Ovary (tissue), 10 donors: ENCODE measurements at regions of chr1 and their contacts with region 1.

Region 1: DNA sequence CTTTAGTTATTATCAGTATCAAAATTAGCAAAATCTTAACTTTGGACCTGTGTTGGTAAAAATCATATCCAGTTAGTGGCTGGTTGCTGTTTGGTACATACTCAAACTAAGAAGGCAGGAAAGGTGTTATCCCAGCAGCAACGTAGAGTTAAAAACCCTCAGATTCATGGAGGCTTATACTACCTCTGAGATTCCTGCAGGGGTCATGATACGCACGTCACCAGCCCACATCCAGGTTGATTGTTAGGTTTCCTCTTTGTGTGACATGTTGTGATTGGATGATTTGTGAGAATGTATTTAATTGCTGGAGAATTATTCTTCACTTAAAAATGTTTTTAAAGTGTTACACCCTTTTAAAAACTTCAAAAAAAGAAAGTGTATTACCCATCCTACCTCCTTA is 423.3 kb upstream of the ADGRL2 start:
- DNase-seq: no peak
- H3K4me3 ChIP-seq: no peak overlapping the region
- H3K27ac ChIP-seq: no peak overlapping the region
- H3K4me1 ChIP-seq: no peaks in the 10 kb centered on the region
- H3K27me3 ChIP-seq: no peaks in the 10 kb centered on the region
- CTCF ChIP-seq: no peak
- EP300 ChIP-seq: no peak
- POLR2A ChIP-seq: no peak

Region 2: GRCh38 chr1:81407000-81407875 is 29.8 kb after region 1 on chr1:
- intact Hi-C with region 1: loop called in 1 of 4 experiments (anchors 1 kb)
- DNase-seq: no peak
- H3K4me3 ChIP-seq: no peak overlapping the region
- H3K27ac ChIP-seq: no peak overlapping the region
- H3K4me1 ChIP-seq: no peaks in the 10 kb centered on the region
- H3K27me3 ChIP-seq: no peaks in the 10 kb centered on the region
- CTCF ChIP-seq: no peak
- EP300 ChIP-seq: no peak
- POLR2A ChIP-seq: no peak

Region 3: DNA sequence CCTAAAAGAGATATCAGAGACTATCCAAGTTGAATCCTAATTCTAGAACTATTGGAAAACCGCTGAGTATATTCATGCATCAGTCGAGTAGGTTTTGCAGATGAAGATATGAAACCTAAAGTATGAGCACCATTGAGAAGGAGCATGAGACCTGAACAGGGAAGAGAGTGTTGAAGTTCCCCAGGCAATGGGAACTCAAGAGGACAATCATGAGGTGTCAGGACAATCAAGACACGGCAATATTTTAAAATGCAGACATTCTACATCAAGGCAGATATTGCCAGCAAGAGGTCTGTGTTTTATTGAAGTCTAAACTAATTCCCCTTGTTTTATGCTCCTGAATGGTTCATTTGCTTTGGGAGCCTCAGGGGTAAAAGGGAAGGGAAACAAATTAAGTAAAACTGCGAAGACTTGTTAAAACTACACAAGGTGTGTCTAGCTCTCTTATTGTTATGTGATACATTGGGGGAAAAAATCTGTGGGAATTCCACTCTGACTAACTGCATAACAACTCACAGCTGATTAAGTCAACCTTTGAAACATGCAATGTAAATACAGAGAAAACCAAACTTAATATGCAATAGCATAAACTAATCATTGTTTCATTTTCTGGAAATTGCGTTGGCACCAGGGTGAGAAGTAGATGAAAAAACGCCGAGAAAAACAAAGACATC is 75.4 kb after region 1 on chr1:
- intact Hi-C with region 1: no loop called
- DNase-seq: no peak
- H3K4me3 ChIP-seq: no peak overlapping the region
- H3K27ac ChIP-seq: no peak overlapping the region
- H3K4me1 ChIP-seq: no peaks in the 10 kb centered on the region
- H3K27me3 ChIP-seq: no peaks in the 10 kb centered on the region
- CTCF ChIP-seq: no peak
- EP300 ChIP-seq: no peak
- POLR2A ChIP-seq: no peak

Region 4: DNA sequence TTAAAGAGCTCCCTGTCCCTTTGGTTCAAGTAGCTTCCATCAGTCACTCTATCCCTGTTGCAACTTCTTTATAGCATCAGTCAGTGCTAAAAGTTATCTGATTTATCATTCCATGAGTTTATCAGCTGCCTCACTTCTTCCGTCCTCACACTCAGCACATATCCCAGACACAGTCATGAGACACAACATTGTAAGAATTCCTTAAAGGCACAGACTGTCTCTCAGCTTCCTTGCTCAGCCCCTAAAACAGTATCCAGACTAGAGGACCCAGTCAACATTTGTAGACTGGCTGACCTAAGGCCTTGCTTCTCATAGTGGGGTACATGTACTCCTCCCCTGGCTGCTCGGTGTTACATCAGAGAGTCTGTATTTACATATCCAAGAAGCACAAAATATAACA is 258.4 kb after region 1 on chr1:
- intact Hi-C with region 1: no loop called
- DNase-seq: no peak
- H3K4me3 ChIP-seq: no peak overlapping the region
- H3K27ac ChIP-seq: no peak overlapping the region
- H3K4me1 ChIP-seq: no peaks in the 10 kb centered on the region
- H3K27me3 ChIP-seq: no peaks in the 10 kb centered on the region
- CTCF ChIP-seq: no peak
- EP300 ChIP-seq: no peak
- POLR2A ChIP-seq: no peak